ENCODE measurements at regions of chr2 and their contacts with region 1.

Region 1: DNA sequence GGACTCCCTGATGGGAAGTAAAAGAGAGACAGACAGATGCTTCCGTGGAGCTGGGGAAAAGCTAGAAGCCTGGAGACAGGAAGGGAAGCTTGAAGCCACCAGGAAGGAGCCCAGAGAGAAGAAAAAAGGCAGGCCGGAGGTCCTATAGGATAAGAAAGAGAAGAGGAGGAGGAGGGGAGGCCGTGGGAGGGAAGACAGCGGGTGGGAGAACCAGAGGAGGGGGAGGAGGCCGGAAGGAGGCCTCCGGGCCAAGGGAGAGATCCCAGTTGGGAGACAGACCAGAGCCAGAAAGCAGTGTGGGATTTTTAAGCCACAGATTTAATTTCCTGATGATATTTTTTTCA is 107.1 kb upstream of the PKDCC start:
- DNase-seq: peak; percentile 96
- H3K4me3 ChIP-seq: no peak overlapping the region
- H3K27ac ChIP-seq: peak overlapping the region; percentile 74
- H3K4me1 ChIP-seq: peaks cover 69% of the 10 kb centered on the region
- H3K27me3 ChIP-seq: no peaks in the 10 kb centered on the region
- CTCF ChIP-seq: no peak

Region 2: DNA sequence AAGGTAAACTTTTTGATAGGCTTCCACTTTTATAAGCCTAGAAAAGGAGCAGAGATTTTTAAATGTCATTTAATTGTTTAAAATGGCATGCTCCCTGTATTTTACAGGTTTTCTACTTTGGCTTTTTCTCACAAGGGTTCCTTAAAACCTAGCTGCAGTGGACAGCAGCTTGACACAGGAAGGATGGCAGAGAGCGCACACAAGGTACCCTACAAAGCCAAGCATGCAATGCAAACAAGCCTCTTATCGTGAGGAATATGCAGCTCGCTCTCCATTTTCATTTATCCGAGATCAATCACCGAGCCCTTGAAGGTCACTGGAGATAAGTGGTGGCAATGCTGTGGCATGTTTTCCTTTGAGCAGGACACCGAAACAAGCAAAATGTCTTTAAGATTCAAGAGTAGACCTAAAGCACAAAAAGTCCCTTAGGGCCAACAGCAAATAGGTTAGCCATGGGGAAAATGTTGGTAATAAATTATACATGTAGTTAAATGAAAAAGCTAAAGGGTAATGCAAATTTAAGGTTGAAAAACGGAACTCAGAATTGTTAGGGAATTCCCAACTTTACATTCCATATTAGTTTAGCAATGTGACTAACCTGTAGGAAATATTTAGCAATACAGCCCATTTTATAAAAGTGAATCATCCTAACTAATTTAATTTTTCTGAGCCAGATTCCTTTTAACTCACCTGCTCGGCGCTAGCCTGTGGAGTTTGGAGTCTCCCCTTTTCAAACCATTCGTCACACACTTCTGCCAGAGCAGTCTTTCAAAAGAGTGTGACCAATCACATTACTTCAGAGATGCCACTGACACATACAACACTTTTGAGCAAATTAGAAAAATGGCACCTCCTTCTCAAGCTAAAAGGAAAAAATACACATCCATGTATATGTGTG is 230.8 kb before region 1 on chr2:
- CTCF ChIA-PET with region 1: no interaction called
- POLR2A ChIA-PET with region 1: no interaction called
- intact Hi-C with region 1: no loop called
- DNase-seq: no peak
- H3K4me3 ChIP-seq: no peak overlapping the region
- H3K27ac ChIP-seq: no peak overlapping the region
- H3K4me1 ChIP-seq: no peaks in the 10 kb centered on the region
- H3K27me3 ChIP-seq: peaks cover 14% of the 10 kb centered on the region
- CTCF ChIP-seq: no peak

Region 3: DNA sequence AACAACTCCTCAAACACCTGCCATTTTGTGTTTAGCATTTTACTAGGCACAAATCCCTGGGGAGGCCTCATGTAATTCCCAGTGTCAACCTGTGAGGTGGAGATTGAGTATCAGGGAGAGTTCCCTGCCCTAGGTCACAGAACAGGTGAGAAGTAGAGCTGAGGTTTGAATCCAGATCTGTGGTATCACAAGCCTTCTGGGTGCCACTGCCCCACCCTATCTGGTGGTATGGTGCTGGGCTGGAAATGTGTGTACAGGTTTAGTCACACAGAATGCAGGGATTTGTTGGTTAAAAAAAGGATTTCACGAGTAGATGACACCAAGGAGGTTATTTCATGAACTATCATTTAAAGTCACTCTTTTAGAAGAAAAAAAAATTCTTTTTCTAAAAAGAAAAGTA is 71.4 kb after region 1 on chr2:
- CTCF ChIA-PET with region 1: no interaction called
- POLR2A ChIA-PET with region 1: interaction called, 11 read pairs
- intact Hi-C with region 1: no loop called
- DNase-seq: no peak
- H3K4me3 ChIP-seq: no peak overlapping the region
- H3K27ac ChIP-seq: no peak overlapping the region
- H3K4me1 ChIP-seq: peaks cover 10% of the 10 kb centered on the region
- H3K27me3 ChIP-seq: no peaks in the 10 kb centered on the region
- CTCF ChIP-seq: no peak

Region 4: DNA sequence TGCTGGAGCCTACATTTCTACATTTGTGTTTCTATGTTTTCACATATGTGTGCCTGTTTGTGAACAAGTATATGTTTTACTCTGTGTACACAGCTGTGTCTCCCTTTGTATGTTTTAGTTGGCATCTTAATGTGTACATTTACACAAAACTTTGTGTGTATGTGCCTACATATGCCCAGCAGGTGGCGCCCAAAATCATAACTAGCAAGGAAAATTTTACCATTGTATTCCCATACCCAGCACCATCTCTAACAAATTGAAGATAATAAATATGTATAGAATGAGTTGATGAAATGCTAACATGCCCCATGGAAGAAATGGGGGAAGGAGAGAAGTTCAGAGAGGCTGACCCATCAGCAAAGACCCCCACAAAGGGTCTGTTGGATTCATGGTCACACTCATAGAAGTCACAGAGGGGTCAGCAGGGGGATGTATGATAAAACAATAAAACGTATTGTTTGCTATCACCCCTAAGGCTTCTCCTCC is 155.2 kb after region 1 on chr2:
- CTCF ChIA-PET with region 1: no interaction called
- POLR2A ChIA-PET with region 1: no interaction called
- intact Hi-C with region 1: no loop called
- DNase-seq: peak; percentile 87
- H3K4me3 ChIP-seq: no peak overlapping the region
- H3K27ac ChIP-seq: no peak overlapping the region
- H3K4me1 ChIP-seq: peaks cover 7% of the 10 kb centered on the region
- H3K27me3 ChIP-seq: no peaks in the 10 kb centered on the region
- CTCF ChIP-seq: peak; percentile 90

Region 5: DNA sequence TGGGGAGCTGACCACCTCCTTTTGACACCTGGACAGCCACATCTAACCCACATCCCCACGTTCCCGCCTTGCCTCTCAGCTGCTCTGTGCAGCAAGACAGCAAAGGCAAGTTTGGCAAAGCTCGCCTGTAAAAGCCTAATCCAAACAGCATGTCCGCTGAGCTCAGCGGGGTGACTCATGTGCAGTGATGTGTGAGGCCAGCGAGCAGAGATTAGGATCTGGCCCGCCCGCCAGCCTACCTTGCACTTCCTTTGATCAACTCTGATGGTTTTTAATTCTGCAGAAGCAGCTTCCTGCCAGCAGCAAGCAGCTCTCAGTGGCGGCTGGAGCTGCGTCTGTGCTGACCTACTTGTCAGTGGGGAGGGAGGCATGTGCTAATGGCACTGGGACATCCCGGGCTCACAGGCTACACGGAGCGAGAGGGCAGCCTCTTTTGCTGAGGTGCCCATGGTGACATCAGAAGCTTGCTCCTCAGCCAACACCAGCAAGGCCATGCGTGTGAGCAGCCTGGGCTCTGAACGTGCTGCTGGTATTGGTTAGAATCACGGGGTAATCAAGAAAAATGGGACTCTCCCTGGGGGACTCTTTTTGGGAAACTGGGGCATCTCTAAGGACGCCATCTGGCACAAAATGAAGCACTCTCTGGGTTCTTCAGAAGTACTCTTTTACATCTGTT is 192.4 kb after region 1 on chr2:
- CTCF ChIA-PET with region 1: no interaction called
- POLR2A ChIA-PET with region 1: no interaction called
- intact Hi-C with region 1: no loop called
- DNase-seq: peak; percentile 94
- H3K4me3 ChIP-seq: no peak overlapping the region
- H3K27ac ChIP-seq: peak overlapping the region; percentile 52
- H3K4me1 ChIP-seq: peaks cover 83% of the 10 kb centered on the region
- H3K27me3 ChIP-seq: no peaks in the 10 kb centered on the region
- CTCF ChIP-seq: no peak